ENCODE measurements at regions of chr22 and their contacts with region 1.

Region 1: GRCh38 chr22:18077639-18078328 is at the start of gene PEX26:
- DNase-seq: peak; percentile 88 to 93 (median 90)
- H3K4me3 ChIP-seq: peak within 1 kb of the TSS; percentile 80
- H3K27ac ChIP-seq: peak within 1 kb of the TSS; percentile 27 to 36
- H3K4me1 ChIP-seq: peaks cover 1% of the 10 kb centered on the region
- H3K27me3 ChIP-seq: no peaks in the 10 kb centered on the region
- CTCF ChIP-seq: peak in 1 of 3 donors; percentile 18
- EP300 ChIP-seq: no peak
- POLR2A ChIP-seq: no peak
- total RNA-seq, gene PEX26: 13.0 to 33.4 (median 26.3) TPM

Region 2: DNA sequence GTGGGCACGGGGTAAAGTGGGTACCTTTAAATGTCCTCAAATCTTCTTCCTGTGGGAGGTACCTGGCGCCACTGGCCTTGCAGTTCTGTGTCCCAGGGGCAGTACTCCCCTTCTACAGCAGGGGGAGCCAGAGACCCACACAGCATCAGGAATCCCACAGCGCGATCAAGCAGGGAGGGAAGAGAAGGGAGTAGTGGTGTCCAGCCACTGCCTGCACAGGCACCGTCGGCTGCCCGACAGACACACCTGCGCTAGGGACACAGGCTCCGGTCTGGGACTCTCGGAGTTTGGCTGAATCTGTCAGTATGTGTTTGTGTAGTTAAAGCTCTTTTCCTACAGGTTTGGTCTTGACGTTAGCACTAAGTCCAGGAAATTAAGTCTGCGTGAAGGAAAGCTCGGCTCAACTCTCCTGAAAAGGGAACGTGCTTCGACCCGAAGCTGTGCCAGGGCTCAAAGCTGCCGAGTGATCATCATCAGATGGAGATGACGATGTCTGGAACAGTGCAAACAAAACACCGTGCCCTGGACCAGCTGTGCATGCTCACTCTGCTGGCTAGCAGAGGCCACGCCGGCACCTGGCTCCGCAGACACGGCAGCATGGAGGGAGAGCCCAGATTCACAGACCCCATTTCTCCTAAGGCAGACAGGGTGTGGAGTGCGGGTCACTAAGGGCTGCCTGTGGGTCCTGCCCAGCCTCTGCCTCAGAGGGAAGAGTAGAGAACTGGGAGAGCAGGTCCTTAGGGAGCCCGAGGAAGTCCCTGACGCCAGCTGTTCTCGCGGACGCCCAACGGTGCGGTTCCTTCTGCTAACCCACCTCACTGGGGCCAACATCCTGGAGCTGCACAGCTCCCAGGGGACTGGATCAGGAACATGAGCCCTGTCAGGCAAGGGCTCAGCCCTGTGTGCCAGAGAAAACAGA is 247.5 kb before region 1 on chr22:
- intact Hi-C with region 1: loop called (anchors 2 to 5 kb)
- DNase-seq: peak; percentile 80 to 92 (median 89)
- H3K4me3 ChIP-seq: no peak overlapping the region
- H3K27ac ChIP-seq: peak overlapping the region in 1 of 2 donors; percentile 8
- H3K4me1 ChIP-seq: no peaks in the 10 kb centered on the region
- H3K27me3 ChIP-seq: no peaks in the 10 kb centered on the region
- CTCF ChIP-seq: peak; percentile 94 to 98 (median 97)
- EP300 ChIP-seq: no peak
- POLR2A ChIP-seq: no peak

Region 3: DNA sequence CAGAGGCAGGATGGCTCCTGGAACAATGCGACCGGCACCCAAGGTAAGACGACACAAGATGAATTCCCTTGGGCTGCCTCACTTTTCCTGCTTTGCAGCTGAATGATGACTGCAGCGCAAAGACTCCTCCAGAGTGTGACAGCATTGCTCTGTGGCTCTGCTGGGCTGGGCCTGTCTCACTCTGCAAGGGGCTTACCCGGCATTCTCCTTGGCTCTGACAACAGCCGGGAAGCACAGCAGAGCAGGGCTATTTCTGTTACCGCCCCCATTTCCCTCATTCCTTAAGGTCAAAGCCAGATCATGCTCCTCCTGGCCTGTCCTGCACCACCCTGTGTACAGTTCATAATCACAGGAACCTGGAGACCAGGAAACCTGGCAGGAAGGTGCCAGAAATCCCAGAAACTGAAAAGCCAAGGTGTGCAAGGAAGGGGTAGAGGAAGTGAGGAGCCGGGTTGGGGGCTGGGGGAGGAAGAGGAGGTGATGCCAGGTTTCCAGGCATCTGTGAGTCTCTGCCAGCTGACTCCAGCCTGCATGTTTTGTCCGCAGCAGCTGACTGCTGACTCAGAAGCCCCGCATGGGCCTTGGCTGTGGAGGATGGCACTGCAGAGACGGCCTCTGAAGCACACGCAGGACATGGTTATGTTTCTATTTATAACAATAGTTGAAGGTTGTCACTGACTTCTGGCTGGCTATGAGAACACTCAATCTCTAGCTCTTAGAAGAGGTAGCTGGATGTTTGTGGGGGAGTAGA is 167.0 kb before region 1 on chr22:
- intact Hi-C with region 1: loop called in 3 of 4 experiments (anchors 2 to 10 kb)
- DNase-seq: peak; percentile 71 to 77 (median 73)
- H3K4me3 ChIP-seq: no peak overlapping the region
- H3K27ac ChIP-seq: peak overlapping the region in 1 of 2 donors; percentile 54
- H3K4me1 ChIP-seq: peaks cover 12% of the 10 kb centered on the region
- H3K27me3 ChIP-seq: no peaks in the 10 kb centered on the region
- CTCF ChIP-seq: peak in 2 of 3 donors; percentile 4 to 11
- EP300 ChIP-seq: peak; percentile 27
- POLR2A ChIP-seq: no peak

Region 4: DNA sequence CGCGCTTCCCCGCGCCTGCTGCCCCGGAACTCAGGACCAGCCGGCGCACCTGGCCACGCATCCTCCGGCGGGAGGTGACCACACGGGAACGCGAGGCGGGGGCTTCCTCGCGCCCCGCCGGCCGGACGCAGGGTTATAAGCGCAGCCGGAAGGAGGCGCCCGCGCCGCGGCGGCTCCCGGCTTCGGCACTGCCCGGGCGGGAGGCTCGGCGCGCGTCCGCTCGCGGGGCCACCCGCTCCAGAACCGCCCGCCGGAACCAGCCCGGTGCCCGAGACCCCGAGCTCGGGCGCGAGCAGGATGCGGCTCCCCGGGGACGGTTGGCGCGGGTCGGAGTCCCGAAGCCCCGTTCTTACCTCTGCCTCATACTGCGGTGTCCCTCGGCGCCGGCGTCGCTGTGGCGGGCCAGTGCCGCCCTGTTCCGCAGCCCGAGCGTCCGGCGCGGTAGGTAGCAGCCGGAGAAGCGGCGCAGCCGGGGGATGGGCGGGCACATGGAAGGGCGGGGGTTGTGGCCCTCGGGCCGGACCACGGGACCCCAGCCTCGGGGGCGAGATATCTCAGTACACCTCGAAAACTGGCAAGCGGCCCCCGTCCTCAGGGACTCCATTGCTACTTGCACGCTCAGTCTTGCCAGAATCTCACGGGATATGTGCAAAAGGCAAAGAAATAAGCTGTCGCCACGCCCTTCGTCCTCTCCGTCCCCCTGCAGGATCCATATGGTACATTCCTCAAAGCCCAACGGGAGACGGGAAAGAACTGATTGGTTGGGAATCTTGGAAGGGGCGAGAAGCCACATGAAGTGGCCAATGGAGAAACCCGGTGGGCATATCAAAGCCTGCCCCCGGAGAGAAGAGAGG is 76.5 kb before region 1 on chr22:
- intact Hi-C with region 1: loop called in 2 of 4 experiments (anchors 2 to 10 kb)
- DNase-seq: peak; percentile 90 to 93 (median 92)
- H3K4me3 ChIP-seq: peak overlapping the region; percentile 68
- H3K27ac ChIP-seq: peak overlapping the region; percentile 77 to 98
- H3K4me1 ChIP-seq: peaks cover 5% of the 10 kb centered on the region
- H3K27me3 ChIP-seq: no peaks in the 10 kb centered on the region
- CTCF ChIP-seq: peak in 2 of 3 donors; percentile 52 to 64
- EP300 ChIP-seq: no peak
- POLR2A ChIP-seq: peak; percentile 73

Region 5: DNA sequence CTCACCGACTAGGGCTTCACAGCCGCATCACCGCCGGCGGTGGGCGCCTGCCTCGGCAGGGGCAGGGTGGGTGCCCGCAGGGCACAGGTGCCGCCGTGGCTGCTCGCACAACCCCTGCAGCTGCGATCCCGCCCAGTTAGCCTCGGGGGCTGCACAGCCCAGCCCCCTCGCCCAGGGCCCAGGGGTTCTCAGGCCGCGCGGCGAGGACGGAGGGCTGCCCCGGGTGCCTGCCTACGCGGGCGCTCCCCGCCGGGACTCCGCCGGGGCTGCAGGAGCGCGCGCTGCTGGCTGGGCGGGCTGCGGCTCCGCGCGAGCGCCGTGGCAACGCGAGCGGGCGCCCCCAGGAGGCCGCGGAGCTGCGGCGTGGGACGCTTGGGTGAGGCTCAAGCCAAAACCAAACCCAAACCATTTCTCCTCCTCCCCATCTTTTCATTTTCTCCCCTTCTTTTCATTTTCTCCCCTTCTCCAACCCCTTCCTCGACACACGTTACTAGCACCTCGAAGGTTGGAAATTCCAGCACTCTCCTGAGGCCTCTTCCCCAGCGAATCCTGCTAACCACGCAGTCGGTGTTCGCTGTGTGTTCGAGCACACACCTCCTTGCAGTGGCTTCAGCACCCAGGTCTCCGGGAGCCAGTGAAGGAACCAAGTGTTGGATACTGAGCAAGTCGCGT is 53.4 kb before region 1 on chr22 and contains the start of gene MICAL3:
- intact Hi-C with region 1: loop called in 3 of 4 experiments (anchors 5 to 10 kb)
- DNase-seq: peak; percentile 50 to 80 (median 68)
- H3K4me3 ChIP-seq: peak within 1 kb of the TSS; percentile 59
- H3K27ac ChIP-seq: peak within 1 kb of the TSS; percentile 73 to 77
- H3K4me1 ChIP-seq: peaks cover 6% of the 10 kb centered on the region
- H3K27me3 ChIP-seq: no peaks in the 10 kb centered on the region
- CTCF ChIP-seq: peak; percentile 36 to 69 (median 57)
- EP300 ChIP-seq: no peak
- POLR2A ChIP-seq: no peak
- total RNA-seq, gene MICAL3: 17.5 to 106 (median 81.6) TPM

Region 6: GRCh38 chr22:18091916-18092526 is 14.2 kb after region 1 on chr22:
- intact Hi-C with region 1: no loop called
- DNase-seq: peak; percentile 71 to 83 (median 74)
- H3K4me3 ChIP-seq: peak overlapping the region; percentile 5
- H3K27ac ChIP-seq: peak overlapping the region; percentile 67 to 80
- H3K4me1 ChIP-seq: peaks cover 5% of the 10 kb centered on the region
- H3K27me3 ChIP-seq: no peaks in the 10 kb centered on the region
- CTCF ChIP-seq: no peak
- EP300 ChIP-seq: no peak
- POLR2A ChIP-seq: no peak